Activated CD4-positive, alpha-beta T cell treated with anti-CD3 and anti-CD28 coated beads for 36 hours (primary cell): ENCODE measurements at regions of chr5 and their contacts with region 1.

Region 1: GRCh38 chr5:75668977-75669689 is 48.1 kb downstream of the POC5 start:
- DNase-seq: peak; percentile 82
- ATAC-seq: peak; percentile 97
- H3K4me3 Mint-ChIP-seq: peak overlapping the region; percentile 67
- H3K27ac Mint-ChIP-seq: peak overlapping the region; percentile 91
- H3K4me1 Mint-ChIP-seq: peaks cover 37% of the 10 kb centered on the region
- H3K27me3 Mint-ChIP-seq: no peaks in the 10 kb centered on the region

Region 2: DNA sequence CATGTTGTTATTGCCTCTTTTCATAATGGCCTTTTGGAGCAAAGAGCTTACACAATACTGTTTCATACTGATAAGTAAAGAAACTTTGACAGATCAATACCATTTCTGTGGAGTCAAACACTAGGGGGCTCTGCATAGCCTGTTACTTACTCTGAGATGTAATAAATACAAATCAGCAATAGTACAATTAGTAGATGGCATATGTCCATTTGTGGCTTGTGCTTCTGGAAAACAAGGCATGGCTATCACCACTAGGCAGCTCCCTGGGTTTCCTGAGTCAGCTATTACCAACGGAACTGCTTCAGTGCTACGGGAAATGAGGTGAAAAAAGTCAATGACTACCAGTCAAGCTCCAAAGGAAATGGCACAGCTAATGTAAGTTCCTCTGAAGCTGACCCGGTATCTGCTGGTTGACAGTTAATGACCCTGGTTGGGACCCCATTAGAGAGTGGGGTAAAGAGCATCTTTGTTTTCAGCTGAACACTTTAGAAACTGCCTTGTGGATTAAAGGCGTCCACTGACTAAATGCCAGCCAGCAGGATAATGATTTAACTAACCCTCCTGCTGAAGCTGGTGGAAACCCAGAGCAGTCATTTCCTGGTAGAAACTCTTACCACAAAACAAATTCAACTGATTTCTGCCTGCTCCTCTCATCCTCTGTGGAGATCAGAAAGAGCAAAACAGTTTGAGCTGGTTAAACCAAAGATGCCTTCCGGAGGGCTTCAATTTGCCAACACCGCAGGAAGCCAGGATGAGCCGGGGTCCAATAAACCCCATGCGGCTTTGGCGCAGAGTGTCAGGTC is 734.0 kb before region 1 on chr5:
- CTCF ChIA-PET with region 1: no interaction called
- POLR2A ChIA-PET with region 1: no interaction called
- intact Hi-C with region 1: loop called in 1 of 2 experiments (anchors 10 kb)
- DNase-seq: peak; percentile 34
- ATAC-seq: peak; percentile 95
- H3K4me3 Mint-ChIP-seq: peak overlapping the region; percentile 25
- H3K27ac Mint-ChIP-seq: peak overlapping the region; percentile 24
- H3K4me1 Mint-ChIP-seq: peaks cover 28% of the 10 kb centered on the region
- H3K27me3 Mint-ChIP-seq: peaks cover 2% of the 10 kb centered on the region

Region 3: DNA sequence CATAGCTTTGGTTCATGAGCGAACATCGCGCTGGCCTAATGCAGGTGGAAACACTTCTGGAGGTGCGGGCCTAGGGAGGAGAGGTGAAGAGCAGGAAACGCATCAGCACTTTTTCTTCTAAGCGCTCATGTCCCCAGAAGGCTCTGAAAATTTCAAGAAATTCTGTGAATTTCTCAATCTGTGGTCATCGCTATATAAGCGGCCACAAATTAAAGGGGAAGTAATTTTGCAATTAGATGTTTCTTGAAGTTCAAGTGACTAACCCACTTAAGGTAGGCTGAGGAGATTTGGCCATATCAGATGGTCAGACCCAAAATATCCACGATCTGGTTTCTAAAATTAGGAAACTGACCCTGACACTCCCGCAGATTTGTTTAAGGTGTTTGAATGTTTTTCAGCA is 348.8 kb before region 1 on chr5:
- CTCF ChIA-PET with region 1: no interaction called
- POLR2A ChIA-PET with region 1: no interaction called
- intact Hi-C with region 1: loop called in 1 of 2 experiments (anchors 1 kb)
- DNase-seq: no peak
- ATAC-seq: no peak
- H3K4me3 Mint-ChIP-seq: no peak overlapping the region
- H3K27ac Mint-ChIP-seq: no peak overlapping the region
- H3K4me1 Mint-ChIP-seq: peaks cover 23% of the 10 kb centered on the region
- H3K27me3 Mint-ChIP-seq: no peaks in the 10 kb centered on the region

Region 4: DNA sequence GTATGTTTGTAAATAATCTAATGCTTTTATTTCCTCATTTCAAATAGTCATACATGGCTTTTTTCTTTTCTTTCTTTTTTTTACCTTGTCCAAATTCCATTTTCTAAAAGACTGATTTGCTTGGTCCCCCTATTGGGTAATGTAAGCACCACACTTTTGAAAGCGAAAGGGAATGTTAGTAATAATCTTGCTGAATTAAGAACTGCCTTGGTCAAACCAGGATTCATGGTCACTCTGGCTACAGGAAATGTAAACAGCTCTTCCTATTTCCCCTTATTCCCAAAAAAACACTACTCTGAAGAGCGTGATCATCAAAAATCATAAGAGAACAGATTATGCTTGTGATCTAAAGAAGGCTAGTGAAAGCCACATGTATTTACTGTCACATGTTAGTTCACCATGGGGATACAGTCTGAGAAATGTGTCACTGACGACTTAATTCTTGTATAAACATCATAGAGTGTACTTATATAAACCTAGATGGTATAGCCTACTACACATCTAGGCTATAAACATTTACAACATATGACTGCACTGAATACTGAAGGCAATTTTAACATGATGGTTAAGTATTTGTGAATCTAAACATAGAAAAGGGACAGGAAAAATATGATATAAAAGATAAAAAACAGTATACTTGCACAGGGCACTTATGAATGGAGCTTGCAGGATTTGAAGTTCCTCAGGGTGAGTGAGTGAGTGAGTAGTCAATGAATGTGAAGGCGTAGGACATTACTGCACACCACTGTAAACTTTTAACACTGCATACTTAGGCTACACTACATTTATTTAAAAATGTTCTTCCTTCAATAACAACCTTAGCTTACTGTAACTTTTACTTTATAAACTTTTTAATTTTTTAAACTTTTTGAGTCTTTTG is 256.8 kb before region 1 on chr5:
- CTCF ChIA-PET with region 1: no interaction called
- POLR2A ChIA-PET with region 1: no interaction called
- intact Hi-C with region 1: no loop called
- DNase-seq: no peak
- ATAC-seq: no peak
- H3K4me3 Mint-ChIP-seq: no peak overlapping the region
- H3K27ac Mint-ChIP-seq: no peak overlapping the region
- H3K4me1 Mint-ChIP-seq: no peaks in the 10 kb centered on the region
- H3K27me3 Mint-ChIP-seq: no peaks in the 10 kb centered on the region

Region 5: DNA sequence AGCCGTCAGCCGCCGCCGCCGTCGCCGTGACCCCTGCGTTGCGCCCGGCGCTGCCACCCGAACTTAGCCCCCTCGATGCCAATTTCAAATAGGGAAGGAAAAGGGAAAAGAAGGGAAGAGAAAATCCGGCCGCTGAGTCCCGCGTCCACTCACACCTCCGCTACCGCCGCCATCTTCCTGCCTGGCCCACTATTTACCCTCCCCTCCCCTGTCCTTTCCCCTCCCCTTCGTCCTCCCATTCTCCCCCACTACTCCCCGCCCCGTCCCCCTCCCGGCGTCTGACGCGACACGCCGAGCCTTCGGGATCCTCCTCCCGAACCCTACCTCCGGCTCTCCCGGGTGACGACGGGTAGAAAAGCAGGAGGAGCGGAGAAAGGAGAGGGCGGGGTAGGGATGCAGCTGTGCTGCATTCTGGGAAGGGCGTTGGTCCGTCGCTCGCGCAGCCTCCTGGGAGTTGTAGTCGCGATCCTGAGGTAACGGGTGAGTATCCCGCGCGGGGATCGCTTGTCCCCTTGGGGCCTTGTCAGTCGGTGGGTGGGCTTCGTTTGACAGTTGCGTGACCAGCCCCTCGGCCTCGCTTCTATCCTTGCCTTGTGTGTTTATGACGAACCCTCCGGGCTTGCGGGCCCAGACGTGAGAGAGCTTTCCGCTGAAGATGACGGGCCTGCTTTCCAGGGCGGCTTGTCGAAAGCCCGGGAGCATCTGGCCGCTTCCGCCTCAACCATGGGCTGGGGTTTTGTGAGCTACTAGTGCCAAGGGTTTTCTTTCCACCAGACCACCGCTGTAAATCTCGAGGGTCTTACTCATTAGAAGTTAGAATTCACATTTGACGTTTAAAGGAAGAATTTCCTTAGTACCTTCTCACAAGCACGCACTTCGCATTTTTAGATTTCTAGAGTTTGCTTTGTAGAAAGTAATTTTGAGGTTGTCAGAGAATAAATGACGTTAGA is 157.4 kb before region 1 on chr5 and contains the starts of genes CERT1 and POLK:
- CTCF ChIA-PET with region 1: no interaction called
- POLR2A ChIA-PET with region 1: no interaction called
- intact Hi-C with region 1: loop called (anchors 5 kb)
- DNase-seq: peak; percentile 98
- ATAC-seq: peak; percentile 96
- H3K4me3 Mint-ChIP-seq: peak within 1 kb of the TSS; percentile 98
- H3K27ac Mint-ChIP-seq: peak within 1 kb of the TSS; percentile 96
- H3K4me1 Mint-ChIP-seq: peaks cover 47% of the 10 kb centered on the region
- H3K27me3 Mint-ChIP-seq: no peaks in the 10 kb centered on the region
- total RNA-seq, gene CERT1: 21.6 to 24.5 TPM
- total RNA-seq, gene POLK: 35.5 to 49.1 TPM

Region 6: GRCh38 chr5:75566710-75567309 is 102.3 kb before region 1 on chr5:
- CTCF ChIA-PET with region 1: interaction called, 6 read pairs
- POLR2A ChIA-PET with region 1: interaction called, 4 read pairs
- intact Hi-C with region 1: loop called (anchors 1 to 2 kb)
- DNase-seq: peak; percentile 78
- ATAC-seq: peak; percentile 85
- H3K4me3 Mint-ChIP-seq: peak overlapping the region; percentile 56
- H3K27ac Mint-ChIP-seq: peak overlapping the region; percentile 96
- H3K4me1 Mint-ChIP-seq: peaks cover 63% of the 10 kb centered on the region
- H3K27me3 Mint-ChIP-seq: no peaks in the 10 kb centered on the region

Region 7: DNA sequence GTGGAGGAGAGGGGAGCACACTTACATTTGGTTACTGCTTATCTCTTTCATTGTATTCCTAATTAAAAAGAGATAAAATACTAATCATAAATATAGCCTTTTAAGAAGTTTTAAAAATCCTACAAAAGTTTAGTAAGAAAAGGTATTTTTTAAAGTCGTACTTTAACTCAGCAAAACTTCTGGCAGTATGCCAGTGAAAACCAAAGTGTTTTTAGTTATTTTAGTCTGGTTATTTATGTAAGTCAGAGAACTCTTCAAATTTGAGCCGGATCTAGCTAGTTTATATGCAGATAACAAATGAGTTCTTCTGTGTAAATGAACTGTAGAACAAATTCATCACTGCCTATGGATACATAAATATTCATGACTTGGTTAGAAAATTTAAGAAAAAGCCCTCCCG is 94.3 kb before region 1 on chr5:
- CTCF ChIA-PET with region 1: interaction called, 6 read pairs
- POLR2A ChIA-PET with region 1: no interaction called
- intact Hi-C with region 1: loop called in 1 of 2 experiments (anchors 2 kb)
- DNase-seq: no peak
- ATAC-seq: no peak
- H3K4me3 Mint-ChIP-seq: no peak overlapping the region
- H3K27ac Mint-ChIP-seq: peak overlapping the region; percentile 82
- H3K4me1 Mint-ChIP-seq: peaks cover 20% of the 10 kb centered on the region
- H3K27me3 Mint-ChIP-seq: no peaks in the 10 kb centered on the region

Region 8: DNA sequence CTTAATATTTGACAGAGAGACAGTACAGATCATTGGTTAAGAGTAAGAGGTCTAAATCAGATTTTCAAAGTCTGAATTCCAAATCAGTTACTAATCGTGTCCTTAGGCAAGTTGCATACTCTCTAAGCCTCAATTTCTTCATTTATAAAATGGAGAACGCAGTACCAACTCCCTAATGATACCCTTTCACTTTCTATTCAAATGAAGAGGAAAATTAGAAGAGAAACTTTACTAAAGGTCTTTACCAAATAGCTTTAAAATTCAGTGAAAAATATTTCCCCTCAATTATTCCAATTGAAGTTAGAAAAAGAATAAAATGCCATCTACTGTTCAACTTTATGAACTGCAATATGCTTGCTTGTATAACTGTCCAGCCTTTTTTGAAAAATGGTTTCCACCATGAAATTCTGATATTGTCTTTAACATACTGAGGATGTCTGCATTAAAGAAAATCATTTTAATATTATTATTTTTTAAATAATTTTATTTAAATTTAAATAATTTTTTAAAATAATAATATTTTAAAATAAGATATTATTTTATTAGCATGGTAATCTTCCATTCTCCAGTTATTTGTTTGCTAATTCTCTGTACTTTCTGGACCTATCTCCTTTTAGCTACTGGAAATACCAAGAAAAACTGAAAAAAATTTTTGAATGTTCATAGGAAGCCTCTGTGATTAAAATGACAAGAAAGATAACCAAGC is 12.1 kb after region 1 on chr5:
- CTCF ChIA-PET with region 1: interaction called, 14 read pairs
- POLR2A ChIA-PET with region 1: no interaction called
- intact Hi-C with region 1: no loop called
- DNase-seq: no peak
- ATAC-seq: peak; percentile 45
- H3K4me3 Mint-ChIP-seq: no peak overlapping the region
- H3K27ac Mint-ChIP-seq: no peak overlapping the region
- H3K4me1 Mint-ChIP-seq: peaks cover 13% of the 10 kb centered on the region
- H3K27me3 Mint-ChIP-seq: no peaks in the 10 kb centered on the region

Region 9: DNA sequence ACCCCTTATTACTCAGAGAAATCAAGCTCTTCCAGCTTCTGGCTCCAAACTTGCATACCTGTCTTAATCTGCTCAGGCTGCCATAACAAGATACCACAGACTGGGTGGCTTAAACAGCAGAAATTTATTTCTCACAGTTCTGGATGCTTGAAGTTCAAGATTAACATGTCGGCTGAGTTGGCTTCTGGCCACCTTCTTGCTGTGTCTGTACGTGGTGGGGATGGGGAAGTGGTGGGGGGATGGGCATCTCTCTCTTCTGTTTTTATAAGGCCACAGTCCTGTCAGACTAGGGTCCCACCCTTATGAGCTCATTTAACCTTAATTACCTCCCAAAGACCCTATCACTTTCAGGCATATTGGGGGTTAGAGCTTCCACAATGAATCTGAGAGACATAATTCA is 554.6 kb after region 1 on chr5:
- CTCF ChIA-PET with region 1: no interaction called
- POLR2A ChIA-PET with region 1: no interaction called
- intact Hi-C with region 1: no loop called
- DNase-seq: no peak
- ATAC-seq: no peak
- H3K4me3 Mint-ChIP-seq: no peak overlapping the region
- H3K27ac Mint-ChIP-seq: no peak overlapping the region
- H3K4me1 Mint-ChIP-seq: no peaks in the 10 kb centered on the region
- H3K27me3 Mint-ChIP-seq: no peaks in the 10 kb centered on the region